Activated CD4-positive, alpha-beta memory T cell treated with anti-CD3 and anti-CD28 coated beads for 36 hours (primary cell): ENCODE measurements at regions of chr19 and their contacts with region 1.

Region 1: GRCh38 chr19:5803752-5804515 is 933 bp upstream of the NRTN start:
- DNase-seq: peak; percentile 97
- H3K4me3 Mint-ChIP-seq: peak overlapping the region; percentile 66
- H3K27ac Mint-ChIP-seq: no peak overlapping the region
- H3K4me1 Mint-ChIP-seq: peaks cover 21% of the 10 kb centered on the region
- H3K27me3 Mint-ChIP-seq: peaks cover 22% of the 10 kb centered on the region

Region 2: DNA sequence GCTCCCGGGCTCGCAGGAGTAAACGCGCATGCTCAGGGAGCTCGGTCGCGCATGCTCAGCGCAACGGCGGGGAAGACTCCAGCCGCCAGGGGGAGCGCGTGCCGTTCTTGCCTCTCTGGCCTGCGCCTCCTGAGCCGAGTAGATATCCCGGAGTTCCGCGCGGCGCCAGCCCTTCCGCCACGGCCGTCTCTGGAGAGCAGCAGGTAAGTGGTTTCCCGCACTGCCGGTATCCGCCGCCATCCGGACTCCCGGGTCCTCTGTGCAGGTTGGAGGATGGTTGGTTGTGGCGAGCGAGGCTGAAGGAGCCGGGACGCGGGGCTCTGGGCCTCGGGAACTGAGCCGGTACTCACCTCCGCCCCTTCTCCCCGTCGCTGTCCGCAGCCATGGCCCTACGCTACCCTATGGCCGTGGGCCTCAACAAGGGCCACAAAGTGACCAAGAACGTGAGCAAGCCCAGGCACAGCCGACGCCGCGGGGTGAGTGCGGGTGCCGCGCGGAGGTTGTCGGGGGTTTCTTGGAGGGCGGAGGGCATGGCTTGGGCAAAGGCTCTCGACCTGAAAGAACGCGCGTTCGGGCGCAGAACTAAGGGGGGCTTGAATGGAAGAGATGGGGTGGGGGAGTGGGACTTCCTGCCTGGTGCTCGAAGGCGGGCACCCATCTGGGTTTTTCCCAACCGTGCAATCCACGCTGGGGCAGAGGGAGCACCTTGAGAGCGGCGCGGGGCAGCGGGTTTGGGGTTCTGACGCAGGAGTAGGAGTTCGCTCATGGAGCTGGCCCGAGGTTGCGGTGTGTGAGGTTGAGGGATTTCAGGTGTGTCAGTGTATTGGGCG is 113.6 kb before region 1 on chr19 and contains the start of gene RPL36:
- CTCF ChIA-PET with region 1: interaction called, 12 read pairs
- POLR2A ChIA-PET with region 1: interaction called, 3 read pairs
- intact Hi-C with region 1: no loop called
- DNase-seq: peak; percentile 99
- H3K4me3 Mint-ChIP-seq: peak within 1 kb of the TSS; percentile 96
- H3K27ac Mint-ChIP-seq: peak within 1 kb of the TSS; percentile 95
- H3K4me1 Mint-ChIP-seq: peaks cover 31% of the 10 kb centered on the region
- H3K27me3 Mint-ChIP-seq: no peaks in the 10 kb centered on the region
- total RNA-seq, gene RPL36: 1,487 to 1,524 TPM

Region 3: DNA sequence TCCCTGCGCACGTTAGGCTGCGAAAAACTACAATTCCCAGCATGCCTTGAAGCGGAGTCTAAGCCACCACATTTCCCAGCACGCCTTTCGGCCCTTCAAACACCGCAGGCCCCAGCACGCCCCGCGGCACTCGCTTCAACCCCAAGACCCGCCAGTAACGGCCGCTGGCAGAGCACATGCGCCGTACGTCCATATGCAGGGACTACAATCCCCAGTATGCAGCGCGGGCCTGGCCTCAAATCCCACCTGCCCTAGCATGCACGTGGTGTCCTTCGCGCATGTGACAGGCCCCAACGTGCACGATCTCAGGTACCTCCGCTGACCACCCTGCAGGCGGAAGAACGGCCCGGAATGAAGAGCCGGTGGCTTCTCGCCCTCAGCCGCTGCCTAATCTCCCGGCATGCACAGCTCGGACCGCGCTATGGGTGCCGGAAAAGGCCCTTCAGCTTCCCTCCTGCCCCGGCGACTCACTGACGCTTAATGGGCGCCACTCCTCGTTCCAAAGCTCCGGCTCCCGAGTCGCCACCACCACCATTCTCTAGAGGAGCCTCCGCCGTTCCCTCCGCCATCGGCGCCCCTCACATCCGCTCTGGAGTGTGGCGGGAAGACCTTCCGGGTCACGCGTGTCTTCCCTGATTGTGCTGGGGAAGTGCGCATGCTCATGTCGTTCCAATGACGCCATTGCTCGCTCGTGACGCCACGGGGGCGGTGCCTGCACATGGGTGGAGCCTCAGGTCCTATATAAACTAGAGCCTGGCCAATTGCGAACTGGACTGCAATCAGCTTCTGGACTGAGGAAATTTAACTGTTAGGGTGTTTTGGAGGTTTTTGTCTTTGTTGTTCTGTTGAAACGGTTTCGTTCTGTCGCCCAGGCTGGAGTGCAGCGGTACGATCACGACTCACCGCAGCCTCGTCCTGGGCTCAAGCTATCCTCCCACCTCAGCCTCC is 13.1 kb before region 1 on chr19 and contains the start of gene DUS3L:
- CTCF ChIA-PET with region 1: interaction called, 84 read pairs
- POLR2A ChIA-PET with region 1: interaction called, 12 read pairs
- intact Hi-C with region 1: no loop called
- DNase-seq: peak; percentile 98
- H3K4me3 Mint-ChIP-seq: peak within 1 kb of the TSS; percentile 100
- H3K27ac Mint-ChIP-seq: peak within 1 kb of the TSS; percentile 100
- H3K4me1 Mint-ChIP-seq: peaks cover 12% of the 10 kb centered on the region
- H3K27me3 Mint-ChIP-seq: no peaks in the 10 kb centered on the region
- total RNA-seq, gene DUS3L: 41.9 to 44.4 TPM

Region 4: GRCh38 chr19:5904352-5905113 is 100.6 kb after region 1 on chr19 and contains the start of gene VMAC:
- CTCF ChIA-PET with region 1: interaction called, 47 read pairs
- POLR2A ChIA-PET with region 1: interaction called, 13 read pairs
- intact Hi-C with region 1: no loop called
- DNase-seq: peak; percentile 100
- H3K4me3 Mint-ChIP-seq: peak within 1 kb of the TSS; percentile 97
- H3K27ac Mint-ChIP-seq: peak within 1 kb of the TSS; percentile 98
- H3K4me1 Mint-ChIP-seq: peaks cover 38% of the 10 kb centered on the region
- H3K27me3 Mint-ChIP-seq: no peaks in the 10 kb centered on the region
- total RNA-seq, gene VMAC: 2.9 to 3.3 TPM

Region 5: DNA sequence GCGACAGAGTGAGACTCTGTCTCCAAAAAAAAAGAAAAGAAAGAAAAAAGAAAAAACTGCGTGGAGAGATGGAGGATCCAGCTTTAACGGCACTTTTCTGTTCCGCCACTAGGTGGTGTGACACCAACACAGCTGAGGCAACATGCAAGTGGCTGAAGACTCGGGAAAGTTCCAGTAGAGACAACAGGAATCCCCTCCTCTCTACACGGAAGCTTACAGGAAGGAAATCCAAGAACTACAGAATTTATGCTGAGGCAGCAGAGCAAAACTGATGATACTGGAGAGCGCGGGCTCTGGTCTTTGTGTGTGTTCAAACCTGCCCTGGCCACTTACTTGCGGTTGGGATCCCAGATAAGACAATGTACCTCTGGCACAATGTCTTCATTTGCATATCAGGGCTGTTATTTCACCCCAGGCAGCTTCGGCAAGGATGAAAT is 164.1 kb after region 1 on chr19:
- CTCF ChIA-PET with region 1: interaction called, 13 read pairs
- POLR2A ChIA-PET with region 1: no interaction called
- intact Hi-C with region 1: no loop called
- DNase-seq: peak; percentile 76
- H3K4me3 Mint-ChIP-seq: peak overlapping the region; percentile 51
- H3K27ac Mint-ChIP-seq: peak overlapping the region; percentile 82
- H3K4me1 Mint-ChIP-seq: peaks cover 75% of the 10 kb centered on the region
- H3K27me3 Mint-ChIP-seq: no peaks in the 10 kb centered on the region

Region 6: GRCh38 chr19:6021878-6022569 is 218.1 kb after region 1 on chr19:
- CTCF ChIA-PET with region 1: interaction called, 48 read pairs
- POLR2A ChIA-PET with region 1: no interaction called
- intact Hi-C with region 1: loop called (anchors 1 kb)
- DNase-seq: peak; percentile 86
- H3K4me3 Mint-ChIP-seq: no peak overlapping the region
- H3K27ac Mint-ChIP-seq: no peak overlapping the region
- H3K4me1 Mint-ChIP-seq: no peaks in the 10 kb centered on the region
- H3K27me3 Mint-ChIP-seq: peaks cover 8% of the 10 kb centered on the region